ENCODE measurements at regions of chr18 and their contacts with region 1.

Region 1: GRCh38 chr18:3245853-3246634 is 1.6 kb upstream of the MYL12A start:
- DNase-seq: peak; percentile 84 to 86
- H3K4me3 ChIP-seq: peak overlapping the region; percentile 72 to 99
- H3K27ac ChIP-seq: peak overlapping the region; percentile 92 to 98
- H3K4me1 ChIP-seq: peaks cover 0 to 6% of the 10 kb centered on the region in 2 donors
- H3K27me3 ChIP-seq: no peaks in the 10 kb centered on the region
- CTCF ChIP-seq: peak; percentile 93
- POLR2A ChIP-seq: peak in 1 of 2 donors; percentile 27

Region 2: DNA sequence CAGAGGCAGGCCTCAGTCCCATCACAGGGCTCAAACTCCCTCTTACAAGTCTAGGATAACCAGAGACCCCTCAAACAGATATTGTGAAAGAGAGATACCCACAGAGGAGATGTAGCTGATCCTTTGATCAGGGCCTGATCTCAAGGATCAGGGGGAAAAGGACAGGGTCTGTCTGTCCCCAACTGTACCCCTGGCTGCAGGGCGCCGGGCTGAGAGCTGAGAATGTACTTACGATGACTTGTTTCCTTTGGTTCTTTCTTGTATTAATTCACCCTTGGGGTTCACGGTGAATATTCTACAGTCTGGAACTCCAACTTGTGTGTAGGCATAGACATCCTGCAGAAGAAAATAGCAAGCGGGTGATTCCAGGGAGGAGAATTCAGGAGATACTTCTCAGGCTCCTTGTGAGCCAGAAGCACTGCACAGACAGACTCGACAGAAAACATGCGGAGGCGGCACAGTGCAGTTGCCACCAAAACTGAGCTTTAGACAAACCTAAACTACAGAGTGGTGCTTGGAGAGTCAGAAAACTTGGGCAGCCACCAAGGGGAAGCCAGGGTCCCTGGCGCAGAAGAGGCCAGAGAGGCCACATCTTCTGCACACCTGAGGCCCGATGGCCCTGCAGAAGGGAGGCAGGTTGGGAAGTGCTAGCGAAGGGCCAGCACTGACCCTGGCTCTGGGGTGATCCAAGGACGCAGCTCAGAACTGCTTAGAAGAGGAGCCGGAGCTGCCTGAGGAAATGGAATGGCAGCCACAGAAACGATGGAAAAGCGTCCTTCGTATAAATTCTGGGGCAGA is 325.3 kb before region 1 on chr18:
- intact Hi-C with region 1: loop called (anchors 10 kb)
- DNase-seq: peak in 1 of 2 donors; percentile 10
- H3K4me3 ChIP-seq: no peak overlapping the region
- H3K27ac ChIP-seq: no peak overlapping the region
- H3K4me1 ChIP-seq: peaks cover 0 to 6% of the 10 kb centered on the region in 2 donors
- H3K27me3 ChIP-seq: no peaks in the 10 kb centered on the region
- CTCF ChIP-seq: no peak
- POLR2A ChIP-seq: no peak

Region 3: DNA sequence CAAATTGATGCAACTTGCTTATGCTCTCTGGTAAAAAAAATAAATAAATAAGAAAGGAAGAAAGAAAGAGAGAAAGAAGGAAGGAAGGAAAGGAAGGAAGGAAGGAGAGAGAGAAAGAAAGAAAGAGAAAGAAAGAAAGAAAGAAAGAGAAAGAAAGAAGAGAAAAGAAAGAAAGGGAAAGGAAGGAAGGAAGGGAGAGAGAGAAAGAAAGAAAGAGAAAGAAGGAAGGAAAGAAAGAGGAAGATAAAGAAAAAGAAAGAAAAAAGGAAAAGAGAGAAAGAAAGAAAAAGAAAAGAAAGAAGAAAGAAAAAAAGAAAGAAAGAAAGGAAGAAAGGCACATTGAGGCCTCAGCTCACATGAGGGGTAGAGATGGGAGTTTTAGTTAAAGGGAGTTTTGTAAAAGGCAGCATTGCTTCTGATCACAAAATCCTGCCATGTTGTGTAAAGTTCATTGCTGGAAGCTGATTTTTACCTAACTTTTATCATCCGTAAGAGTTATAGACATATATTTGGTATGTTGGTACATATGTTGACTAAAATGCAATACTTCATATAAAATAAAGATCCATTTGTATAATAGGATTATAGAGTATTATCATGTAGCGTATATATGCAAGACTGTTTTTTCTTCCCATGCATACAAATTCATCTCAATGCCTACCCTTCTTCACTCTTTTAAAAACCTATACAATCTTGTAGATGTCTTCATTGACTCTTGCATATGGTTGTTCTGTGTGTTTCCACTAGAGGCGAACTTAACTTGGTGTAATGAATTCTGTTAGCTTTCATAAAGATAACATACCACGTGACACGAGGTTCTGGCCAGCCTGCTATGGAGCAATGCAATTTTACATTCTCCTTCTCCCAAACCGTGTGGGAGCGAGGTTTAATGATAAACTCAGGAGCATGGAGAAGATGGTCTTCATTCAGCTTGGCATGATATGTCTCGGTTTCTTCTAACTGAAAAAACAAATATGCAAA is 59.1 kb before region 1 on chr18:
- intact Hi-C with region 1: no loop called
- DNase-seq: peak in 1 of 2 donors; percentile 50
- H3K4me3 ChIP-seq: no peak overlapping the region
- H3K27ac ChIP-seq: no peak overlapping the region
- H3K4me1 ChIP-seq: no peaks in the 10 kb centered on the region
- H3K27me3 ChIP-seq: no peaks in the 10 kb centered on the region
- CTCF ChIP-seq: peak in 1 of 4 experiments; percentile 21
- POLR2A ChIP-seq: no peak

Measured in uterus (tissue), 4 donors.